IMR-90 (cell line): ENCODE measurements at regions of chr9 and their contacts with region 1.

Region 1: GRCh38 chr9:70639853-70640814 is 225.7 kb upstream of the KLF9 start:
- DNase-seq: peak; percentile 60
- ATAC-seq: peak; percentile 88
- H3K4me3 ChIP-seq: no peak overlapping the region
- H3K27ac ChIP-seq: no peak overlapping the region
- H3K4me1 ChIP-seq: no peaks in the 10 kb centered on the region; the same call in 1 of the 2 replicates
- H3K27me3 ChIP-seq: peaks cover 23% of the 10 kb centered on the region
- CTCF ChIP-seq: peak; percentile 85
- POLR2A ChIP-seq: no peak
- RAD21 ChIP-seq: peak; percentile 86

Region 2: DNA sequence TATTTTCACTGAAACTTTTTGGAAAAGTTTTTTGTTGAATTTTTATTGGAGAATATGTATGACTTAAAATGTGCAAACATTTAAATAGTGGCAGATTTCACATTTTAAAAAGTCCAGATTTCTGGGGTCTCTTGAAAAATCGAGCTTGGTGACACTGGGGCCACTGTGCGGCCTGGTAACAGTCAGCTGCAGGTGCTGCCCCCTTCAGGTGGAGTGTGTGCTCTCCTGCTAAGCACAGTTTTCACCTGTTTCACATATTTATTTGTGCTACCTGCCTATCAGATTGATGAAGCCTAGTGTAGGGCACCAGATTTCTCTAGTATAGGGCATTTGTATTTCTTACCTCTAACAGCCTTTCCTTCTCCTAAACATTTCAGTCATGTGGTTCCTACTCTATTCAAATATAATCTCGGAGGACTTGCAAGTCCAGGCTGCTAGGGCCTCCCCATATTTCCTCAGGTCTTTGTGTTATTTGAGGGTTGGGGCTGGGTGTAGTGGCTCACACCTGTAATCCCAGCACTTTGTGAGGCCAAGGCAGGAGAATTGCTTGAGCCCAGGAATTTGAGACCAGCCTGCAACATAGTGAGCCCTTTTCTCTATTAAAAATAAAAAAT is 129.9 kb before region 1 on chr9:
- CTCF ChIA-PET with region 1: no interaction called
- POLR2A ChIA-PET with region 1: no interaction called
- dilution Hi-C with region 1: no loop called
- in situ Hi-C with region 1: no loop called
- intact Hi-C with region 1: no loop called
- DNase-seq: no peak
- ATAC-seq: no peak
- H3K4me3 ChIP-seq: no peak overlapping the region
- H3K27ac ChIP-seq: no peak overlapping the region
- H3K4me1 ChIP-seq: peaks cover 2% of the 10 kb centered on the region; the same call in 1 of the 2 replicates
- H3K27me3 ChIP-seq: no peaks in the 10 kb centered on the region
- CTCF ChIP-seq: peak; percentile 49
- POLR2A ChIP-seq: no peak
- RAD21 ChIP-seq: peak; percentile 33; the same call in 1 of the 2 replicates

Region 3: GRCh38 chr9:70677015-70677739 is 37.0 kb after region 1 on chr9:
- CTCF ChIA-PET with region 1: interaction called, 10 read pairs
- POLR2A ChIA-PET with region 1: no interaction called
- dilution Hi-C with region 1: no loop called
- in situ Hi-C with region 1: no loop called
- intact Hi-C with region 1: no loop called
- DNase-seq: peak; percentile 3
- ATAC-seq: peak; percentile 46; the same call in 1 of the 2 replicates
- H3K4me3 ChIP-seq: no peak overlapping the region
- H3K27ac ChIP-seq: no peak overlapping the region
- H3K4me1 ChIP-seq: no peaks in the 10 kb centered on the region
- H3K27me3 ChIP-seq: no peaks in the 10 kb centered on the region
- CTCF ChIP-seq: no peak
- POLR2A ChIP-seq: no peak
- RAD21 ChIP-seq: no peak

Region 4: DNA sequence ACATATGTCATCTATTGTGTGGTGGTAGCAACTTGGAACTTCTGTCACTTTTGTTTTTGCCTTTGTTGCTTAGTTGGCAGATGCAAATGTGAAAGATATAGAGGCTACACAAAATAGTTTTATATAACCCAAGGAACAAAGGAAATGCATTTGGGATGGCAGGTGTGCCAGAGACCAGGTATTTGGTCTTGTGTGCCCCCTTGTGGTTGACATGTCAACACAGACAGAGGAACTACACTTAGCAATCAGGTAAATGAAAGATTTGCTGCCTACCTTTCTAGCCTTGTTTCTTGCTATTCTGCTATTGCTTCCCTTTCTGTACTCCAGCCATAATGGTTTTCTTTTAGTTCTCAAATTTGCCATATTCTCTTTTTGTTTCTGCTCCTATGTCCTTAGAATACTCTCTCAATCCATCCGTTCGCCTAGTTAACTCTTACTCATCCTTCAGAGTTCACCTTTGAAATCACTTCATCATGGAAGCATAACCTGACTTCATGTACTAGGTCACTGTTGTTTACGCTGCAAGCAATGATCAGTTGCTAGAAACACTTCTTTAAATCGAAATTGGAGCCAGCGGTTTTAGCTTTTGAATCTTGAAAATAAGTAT is 361.7 kb after region 1 on chr9:
- CTCF ChIA-PET with region 1: no interaction called
- POLR2A ChIA-PET with region 1: no interaction called
- dilution Hi-C with region 1: no loop called
- in situ Hi-C with region 1: no loop called
- intact Hi-C with region 1: loop called (anchors 1 kb)
- DNase-seq: peak; percentile 25
- ATAC-seq: no peak
- H3K4me3 ChIP-seq: no peak overlapping the region
- H3K27ac ChIP-seq: no peak overlapping the region
- H3K4me1 ChIP-seq: no peaks in the 10 kb centered on the region
- H3K27me3 ChIP-seq: no peaks in the 10 kb centered on the region
- CTCF ChIP-seq: peak; percentile 53
- POLR2A ChIP-seq: no peak
- RAD21 ChIP-seq: peak; percentile 68

Region 5: GRCh38 chr9:71048280-71048679 is 408.1 kb after region 1 on chr9:
- CTCF ChIA-PET with region 1: no interaction called
- POLR2A ChIA-PET with region 1: no interaction called
- dilution Hi-C with region 1: no loop called
- in situ Hi-C with region 1: no loop called
- intact Hi-C with region 1: loop called (anchors 10 kb)
- DNase-seq: no peak
- ATAC-seq: no peak
- H3K4me3 ChIP-seq: no peak overlapping the region
- H3K27ac ChIP-seq: no peak overlapping the region
- H3K4me1 ChIP-seq: no peaks in the 10 kb centered on the region
- H3K27me3 ChIP-seq: no peaks in the 10 kb centered on the region; the same call in 1 of the 2 replicates
- CTCF ChIP-seq: no peak
- POLR2A ChIP-seq: no peak
- RAD21 ChIP-seq: no peak

Region 6: DNA sequence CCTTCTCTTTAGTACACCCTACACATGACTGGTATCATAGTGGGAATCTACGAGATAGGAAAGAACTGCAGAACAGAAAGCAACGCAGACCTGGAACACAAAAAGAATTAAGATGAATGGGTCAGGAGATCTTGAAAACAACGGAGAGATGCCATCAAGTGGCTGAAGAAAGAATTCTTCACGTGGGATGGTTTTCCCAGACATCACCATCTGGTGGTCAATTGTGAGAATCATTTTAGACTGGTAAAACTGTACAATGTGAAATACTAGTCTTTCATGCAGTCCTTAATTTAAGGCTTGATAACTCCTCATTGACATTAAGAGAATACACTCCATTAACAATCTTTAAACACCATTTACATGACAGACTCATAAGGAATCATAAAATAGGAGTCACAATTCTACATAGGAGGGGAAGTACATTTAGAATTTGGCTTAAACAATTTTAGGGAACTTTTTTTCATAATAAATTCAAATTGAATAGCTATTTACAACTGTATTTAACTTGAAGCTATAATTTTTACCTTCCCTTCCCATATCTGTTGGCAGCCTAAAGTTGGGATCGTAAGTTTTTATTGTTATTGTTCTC is 609.7 kb after region 1 on chr9:
- CTCF ChIA-PET with region 1: interaction called, 6 read pairs
- POLR2A ChIA-PET with region 1: no interaction called
- dilution Hi-C with region 1: no loop called
- in situ Hi-C with region 1: loop called (anchors 5 kb)
- intact Hi-C with region 1: loop called (anchors 1 kb)
- DNase-seq: peak; percentile 64
- ATAC-seq: peak; percentile 91
- H3K4me3 ChIP-seq: no peak overlapping the region
- H3K27ac ChIP-seq: no peak overlapping the region
- H3K4me1 ChIP-seq: no peaks in the 10 kb centered on the region
- H3K27me3 ChIP-seq: no peaks in the 10 kb centered on the region
- CTCF ChIP-seq: peak; percentile 93
- POLR2A ChIP-seq: no peak
- RAD21 ChIP-seq: peak; percentile 64